IMR-90 (cell line): ENCODE measurements at regions of chr4 and their contacts with region 1.

Region 1: DNA sequence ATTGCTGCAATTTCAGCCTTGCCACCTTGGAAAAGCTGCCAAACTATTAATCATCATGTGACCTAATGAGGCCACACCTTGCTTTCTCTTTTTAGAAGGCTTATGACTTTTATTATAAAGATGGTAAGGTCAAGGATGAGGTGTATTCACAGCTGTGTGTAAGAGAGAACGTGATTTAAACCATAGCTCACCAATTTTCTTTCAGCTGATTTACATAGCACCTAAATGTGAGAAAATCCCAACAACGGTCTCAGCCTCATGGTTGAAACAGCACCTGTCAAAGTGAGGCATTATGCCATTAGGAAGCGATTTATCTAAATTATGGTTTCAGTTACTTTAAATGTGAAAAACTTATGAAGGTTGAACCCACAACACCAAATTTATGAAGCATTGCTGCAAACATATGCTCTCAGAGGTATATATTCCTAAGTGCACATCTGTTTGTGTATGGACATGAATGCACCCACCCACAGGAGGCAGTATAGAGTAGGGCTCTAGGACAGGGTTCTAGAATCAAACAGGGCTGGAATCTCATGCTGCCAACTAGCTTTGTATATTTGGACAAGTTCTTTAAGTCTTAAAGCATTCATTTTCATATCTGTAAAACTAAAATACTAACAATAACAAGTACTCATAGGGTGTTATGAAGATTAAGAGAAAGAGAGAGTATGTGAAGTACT is 40.7 kb downstream of the ANXA3 start:
- DNase-seq: no peak
- ATAC-seq: 0 out of 2 replicates have a peak, but pooled peaks have one; percentile 17
- H3K4me3 ChIP-seq: no peak overlapping the region
- H3K27ac ChIP-seq: no peak overlapping the region
- H3K4me1 ChIP-seq: no peaks in the 10 kb centered on the region
- H3K27me3 ChIP-seq: no peaks in the 10 kb centered on the region
- CTCF ChIP-seq: no peak
- POLR2A ChIP-seq: no peak
- RAD21 ChIP-seq: no peak

Region 2: GRCh38 chr4:78545275-78546246 is 46.7 kb before region 1 on chr4:
- CTCF ChIA-PET with region 1: interaction called, 3 read pairs
- POLR2A ChIA-PET with region 1: interaction called, 13 read pairs
- dilution Hi-C with region 1: no loop called
- in situ Hi-C with region 1: no loop called
- intact Hi-C with region 1: no loop called
- DNase-seq: peak; percentile 69
- ATAC-seq: no peak; the same call in 1 of the 2 replicates
- H3K4me3 ChIP-seq: no peak overlapping the region
- H3K27ac ChIP-seq: no peak overlapping the region
- H3K4me1 ChIP-seq: peaks cover 5% of the 10 kb centered on the region; the same call in 1 of the 2 replicates
- H3K27me3 ChIP-seq: no peaks in the 10 kb centered on the region
- CTCF ChIP-seq: no peak
- POLR2A ChIP-seq: no peak
- RAD21 ChIP-seq: no peak